Endothelial cell of umbilical vein (primary cell): ENCODE measurements at regions of chr10 and their contacts with region 1.

Region 1: DNA sequence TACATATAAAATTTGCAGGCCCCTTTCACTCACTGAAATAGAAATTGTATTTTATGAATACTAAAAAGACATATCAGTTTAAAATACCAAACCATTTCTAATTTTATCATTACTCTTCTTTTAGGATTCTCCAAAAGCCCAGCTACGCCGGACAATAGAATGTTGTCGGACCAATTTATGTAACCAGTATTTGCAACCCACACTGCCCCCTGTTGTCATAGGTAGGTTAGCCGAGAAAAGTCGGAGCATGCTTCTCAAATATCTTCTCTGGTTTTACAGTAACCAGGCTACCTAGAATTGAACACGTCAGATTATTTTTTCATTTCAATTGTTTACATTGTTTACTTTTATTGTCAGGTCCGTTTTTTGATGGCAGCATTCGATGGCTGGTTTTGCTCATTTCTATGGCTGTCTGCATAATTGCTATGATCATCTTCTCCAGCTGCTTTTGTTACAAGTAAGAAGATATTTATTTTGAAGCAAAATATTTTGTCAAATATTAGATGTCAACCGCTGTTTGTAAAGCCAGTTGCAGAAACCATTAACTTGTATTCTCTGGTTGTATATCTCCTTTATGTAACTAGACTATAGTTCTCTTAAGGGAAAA is 57.6 kb downstream of the MMRN2 start:
- DNase-seq: peak; percentile 70
- H3K4me3 ChIP-seq: no peak overlapping the region
- H3K27ac ChIP-seq: no peak overlapping the region
- H3K4me1 ChIP-seq: no peaks in the 10 kb centered on the region
- H3K27me3 ChIP-seq: peaks cover 44 to 67% of the 10 kb centered on the region in 2 experiments
- CTCF ChIP-seq: peak; percentile 59 to 63
- POLR2A ChIP-seq: no peak

Region 2: GRCh38 chr10:86399879-86400704 is 499.7 kb before region 1 on chr10:
- CTCF ChIA-PET with region 1: interaction called, 3 read pairs
- POLR2A ChIA-PET with region 1: no interaction called
- dilution Hi-C with region 1: no loop called
- intact Hi-C with region 1: loop called (anchors 5 kb)
- DNase-seq: peak; percentile 88
- H3K4me3 ChIP-seq: peak overlapping the region; percentile 29 to 57 (median 48)
- H3K27ac ChIP-seq: no peak overlapping the region
- H3K4me1 ChIP-seq: peaks cover 23% of the 10 kb centered on the region
- H3K27me3 ChIP-seq: peaks cover 18% of the 10 kb centered on the region in 2 experiments
- CTCF ChIP-seq: peak; percentile 92 to 98
- POLR2A ChIP-seq: no peak

Region 3: DNA sequence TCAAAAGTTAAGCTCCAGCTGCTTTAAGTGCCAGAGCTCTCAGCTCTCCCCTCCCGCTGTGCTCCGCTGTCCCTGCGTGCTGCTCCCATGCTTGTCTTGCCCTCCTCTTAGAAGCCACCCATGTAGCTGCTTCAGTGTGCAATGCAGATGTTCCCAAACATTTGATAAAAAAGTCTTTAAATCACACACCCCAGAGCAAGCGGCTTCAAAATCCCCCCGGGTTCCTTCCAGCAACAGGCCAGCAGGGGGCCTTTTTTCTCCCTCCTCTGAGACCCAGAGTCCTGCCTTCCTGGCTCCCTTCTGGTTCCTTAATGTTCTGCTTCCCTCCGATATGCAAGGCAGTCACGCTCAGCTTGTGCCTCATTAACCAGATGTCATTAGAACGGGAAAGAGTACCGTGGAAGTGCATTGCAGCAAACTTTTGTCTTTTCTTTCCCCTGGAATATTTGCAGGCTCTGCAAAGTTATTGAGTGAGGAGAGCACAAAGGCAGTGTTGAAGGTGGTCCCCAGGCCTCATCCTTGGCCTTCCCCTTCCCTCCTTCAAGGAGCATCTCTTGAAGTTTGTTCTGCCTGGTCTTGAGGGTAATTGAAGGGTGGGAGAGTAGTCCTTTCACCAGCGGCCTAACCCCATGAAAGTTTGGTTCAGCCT is 205.9 kb before region 1 on chr10:
- CTCF ChIA-PET with region 1: interaction called, 129 read pairs
- POLR2A ChIA-PET with region 1: no interaction called
- dilution Hi-C with region 1: no loop called
- intact Hi-C with region 1: loop called (anchors 1 kb)
- DNase-seq: peak; percentile 41
- H3K4me3 ChIP-seq: no peak overlapping the region
- H3K27ac ChIP-seq: no peak overlapping the region
- H3K4me1 ChIP-seq: no peaks in the 10 kb centered on the region
- H3K27me3 ChIP-seq: peaks cover 52 to 53% of the 10 kb centered on the region in 2 experiments
- CTCF ChIP-seq: peak; percentile 70 to 77
- POLR2A ChIP-seq: no peak

Region 4: GRCh38 chr10:86747796-86748581 is 151.8 kb before region 1 on chr10:
- CTCF ChIA-PET with region 1: interaction called, 8 read pairs
- POLR2A ChIA-PET with region 1: no interaction called
- dilution Hi-C with region 1: no loop called
- intact Hi-C with region 1: loop called (anchors 2 kb)
- DNase-seq: peak; percentile 92
- H3K4me3 ChIP-seq: no peak overlapping the region
- H3K27ac ChIP-seq: no peak overlapping the region
- H3K4me1 ChIP-seq: peaks cover 12% of the 10 kb centered on the region
- H3K27me3 ChIP-seq: peaks cover 47 to 67% of the 10 kb centered on the region in 2 experiments
- CTCF ChIP-seq: no peak
- POLR2A ChIP-seq: peak; percentile 46

Region 5: GRCh38 chr10:86878983-86879713 is 20.6 kb before region 1 on chr10:
- CTCF ChIA-PET with region 1: interaction called, 12 read pairs
- POLR2A ChIA-PET with region 1: no interaction called
- dilution Hi-C with region 1: no loop called
- intact Hi-C with region 1: no loop called
- DNase-seq: no peak
- H3K4me3 ChIP-seq: no peak overlapping the region
- H3K27ac ChIP-seq: no peak overlapping the region
- H3K4me1 ChIP-seq: peaks cover 10% of the 10 kb centered on the region
- H3K27me3 ChIP-seq: peaks cover 32 to 45% of the 10 kb centered on the region in 2 experiments
- CTCF ChIP-seq: no peak
- POLR2A ChIP-seq: no peak